ENCODE measurements at regions of chr3 and their contacts with region 1.

Region 1: DNA sequence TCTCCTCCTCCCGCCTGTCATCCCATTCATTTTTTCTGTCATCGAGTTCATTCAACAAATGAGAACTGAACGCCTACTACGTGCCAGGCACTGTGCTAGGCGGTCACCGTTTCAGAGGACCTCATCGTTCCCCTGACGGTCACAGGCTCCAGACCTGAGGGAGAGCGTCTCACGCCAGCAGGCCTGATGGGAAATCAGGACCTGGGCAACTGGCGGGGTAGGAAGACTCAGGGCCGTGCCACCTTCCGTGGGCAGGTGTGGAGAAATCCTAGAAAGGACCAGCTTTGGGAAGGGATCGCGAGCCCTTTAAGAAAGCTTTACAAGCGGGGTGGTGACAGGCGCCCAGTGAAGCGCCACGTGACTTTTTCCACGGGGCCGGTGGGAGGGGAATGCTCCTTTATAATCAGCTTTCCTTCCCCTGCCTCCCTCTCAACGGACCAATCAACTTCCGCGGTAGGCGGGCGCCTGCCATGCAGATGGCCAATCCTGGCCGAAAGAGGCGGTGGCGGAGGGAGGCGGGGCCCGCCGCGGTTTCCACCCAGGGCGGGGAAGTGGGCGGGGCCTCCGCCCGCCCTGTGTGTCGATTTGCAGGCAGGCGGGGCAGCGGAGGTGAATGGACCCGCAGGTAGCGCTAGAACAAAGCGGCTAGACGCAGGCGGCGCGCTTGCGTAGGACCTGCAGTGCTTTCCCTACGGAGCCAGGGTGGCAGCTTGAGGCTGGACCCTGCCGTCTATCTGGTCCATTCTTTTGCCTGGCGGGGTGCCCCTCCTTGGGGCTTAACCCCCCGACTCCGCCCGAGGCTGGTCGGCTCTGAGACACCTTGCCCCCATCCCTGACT is 816 bp upstream of the DUSP7 start:
- DNase-seq: peak; percentile 97
- ATAC-seq: peak; percentile 81
- H3K4me3 ChIP-seq: peak overlapping the region; percentile 62 to 83 (median 68)
- H3K27ac ChIP-seq: peak overlapping the region; percentile 58
- H3K4me1 ChIP-seq: peaks cover 50% of the 10 kb centered on the region
- H3K27me3 ChIP-seq: peaks cover 4 to 31% of the 10 kb centered on the region in 2 experiments; a peak in 4 of 5 replicates
- CTCF ChIP-seq: peak; percentile 76
- EP300 ChIP-seq: 0 out of 4 replicates have a peak, but pooled peaks of 1 of the 2 experiments have one; percentile 7
- POLR2A ChIP-seq: no peak
- RAD21 ChIP-seq: 0 out of 2 replicates have a peak, but pooled peaks have one; percentile 11

Region 2: GRCh38 chr3:51759203-51759602 is 298.0 kb before region 1 on chr3:
- CTCF ChIA-PET with region 1: no interaction called
- POLR2A ChIA-PET with region 1: no interaction called
- in situ Hi-C with region 1: no loop called
- intact Hi-C with region 1: no loop called
- DNase-seq: no peak
- ATAC-seq: no peak
- H3K4me3 ChIP-seq: no peak overlapping the region
- H3K27ac ChIP-seq: no peak overlapping the region
- H3K4me1 ChIP-seq: no peaks in the 10 kb centered on the region
- H3K27me3 ChIP-seq: no peaks in the 10 kb centered on the region
- CTCF ChIP-seq: no peak
- EP300 ChIP-seq: no peak
- POLR2A ChIP-seq: no peak
- RAD21 ChIP-seq: no peak

Region 3: GRCh38 chr3:51799879-51800749 is 257.1 kb before region 1 on chr3:
- CTCF ChIA-PET with region 1: no interaction called
- POLR2A ChIA-PET with region 1: no interaction called
- in situ Hi-C with region 1: no loop called
- intact Hi-C with region 1: no loop called
- DNase-seq: peak; percentile 49
- ATAC-seq: 0 out of 3 replicates have a peak, but pooled peaks have one; percentile 33
- H3K4me3 ChIP-seq: no peak overlapping the region
- H3K27ac ChIP-seq: no peak overlapping the region
- H3K4me1 ChIP-seq: no peaks in the 10 kb centered on the region
- H3K27me3 ChIP-seq: peaks cover 2 to 21% of the 10 kb centered on the region in 2 experiments; a peak in 3 of 5 replicates
- CTCF ChIP-seq: peak; percentile 68
- EP300 ChIP-seq: no peak
- POLR2A ChIP-seq: no peak
- RAD21 ChIP-seq: peak; percentile 33; the same call in 1 of the 2 replicates

Region 4: GRCh38 chr3:51941798-51942602 is 115.2 kb before region 1 on chr3 and contains the starts of genes PARP3 and RRP9:
- CTCF ChIA-PET with region 1: no interaction called
- POLR2A ChIA-PET with region 1: interaction called, 12 read pairs
- in situ Hi-C with region 1: no loop called
- intact Hi-C with region 1: no loop called
- DNase-seq: peak; percentile 99
- ATAC-seq: peak; percentile 88
- H3K4me3 ChIP-seq: peak within 1 kb of the TSS; percentile 80 to 88 (median 84)
- H3K27ac ChIP-seq: peak within 1 kb of the TSS; percentile 93
- H3K4me1 ChIP-seq: peaks cover 33% of the 10 kb centered on the region
- H3K27me3 ChIP-seq: no peaks in the 10 kb centered on the region; a peak in 1 of 5 replicates
- CTCF ChIP-seq: peak; percentile 100
- EP300 ChIP-seq: peak in 1 of 2 experiments; percentile 20; a peak in 1 of 4 replicates
- POLR2A ChIP-seq: peak in 1 of 2 experiments; percentile 45; a peak in 1 of 4 replicates
- RAD21 ChIP-seq: peak; percentile 99
- total RNA-seq, gene PARP3: 7.7 and 11.2 TPM in 2 replicates
- total RNA-seq, gene RRP9: 39.4 and 44.0 TPM in 2 replicates

Region 5: GRCh38 chr3:51995346-51996163 is 61.6 kb before region 1 on chr3 and contains the start of gene RPL29:
- CTCF ChIA-PET with region 1: no interaction called
- POLR2A ChIA-PET with region 1: interaction called, 19 read pairs
- in situ Hi-C with region 1: no loop called
- intact Hi-C with region 1: no loop called
- DNase-seq: peak; percentile 87
- ATAC-seq: peak; percentile 79
- H3K4me3 ChIP-seq: peak within 1 kb of the TSS; percentile 73 to 90 (median 83)
- H3K27ac ChIP-seq: peak within 1 kb of the TSS; percentile 87
- H3K4me1 ChIP-seq: peaks cover 63% of the 10 kb centered on the region
- H3K27me3 ChIP-seq: no peaks in the 10 kb centered on the region; a peak in 1 of 5 replicates
- CTCF ChIP-seq: peak; percentile 49
- EP300 ChIP-seq: peak; percentile 32 to 50; a peak in 2 of 4 replicates
- POLR2A ChIP-seq: peak; percentile 94 to 95
- RAD21 ChIP-seq: peak; percentile 29; the same call in 1 of the 2 replicates
- total RNA-seq, gene RPL29: 1,348 and 1,507 TPM in 2 replicates

Region 6: GRCh38 chr3:52041118-52041731 is 16.0 kb before region 1 on chr3:
- CTCF ChIA-PET with region 1: no interaction called
- POLR2A ChIA-PET with region 1: interaction called, 20 read pairs
- in situ Hi-C with region 1: no loop called
- intact Hi-C with region 1: loop called (anchors 2 kb)
- DNase-seq: peak; percentile 38
- ATAC-seq: peak; percentile 50
- H3K4me3 ChIP-seq: 0 out of 6 replicates have a peak overlapping the region, but pooled peaks of 1 of the 3 experiments have one; percentile 14
- H3K27ac ChIP-seq: no peak overlapping the region
- H3K4me1 ChIP-seq: peaks cover 67% of the 10 kb centered on the region
- H3K27me3 ChIP-seq: no peaks in the 10 kb centered on the region; a peak in 1 of 5 replicates
- CTCF ChIP-seq: peak; percentile 40
- EP300 ChIP-seq: no peak
- POLR2A ChIP-seq: no peak
- RAD21 ChIP-seq: peak; percentile 17; the same call in 1 of the 2 replicates

Region 7: DNA sequence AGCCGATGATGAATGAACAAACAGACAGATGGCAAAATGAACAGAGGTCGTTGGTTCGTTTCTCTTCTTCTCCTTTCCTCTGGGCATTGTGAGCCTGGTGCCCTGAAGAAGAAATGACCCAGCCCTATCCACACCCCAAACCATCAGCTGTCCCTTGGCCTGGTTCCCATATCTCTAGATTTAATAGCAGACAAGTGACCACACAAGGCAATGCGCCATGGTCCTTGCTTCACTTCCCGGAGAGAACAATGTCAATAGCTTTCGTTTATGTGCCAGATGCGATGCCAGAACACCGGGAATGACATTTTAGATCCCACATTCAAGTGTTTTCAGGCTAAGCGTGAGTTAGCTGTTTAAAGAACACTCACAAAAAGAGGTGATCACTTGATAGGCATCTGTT is 79.3 kb after region 1 on chr3:
- CTCF ChIA-PET with region 1: no interaction called
- POLR2A ChIA-PET with region 1: no interaction called
- in situ Hi-C with region 1: loop called (anchors 5 kb)
- intact Hi-C with region 1: no loop called
- DNase-seq: no peak
- ATAC-seq: no peak
- H3K4me3 ChIP-seq: no peak overlapping the region
- H3K27ac ChIP-seq: no peak overlapping the region
- H3K4me1 ChIP-seq: no peaks in the 10 kb centered on the region
- H3K27me3 ChIP-seq: no peaks in the 10 kb centered on the region
- CTCF ChIP-seq: no peak
- EP300 ChIP-seq: no peak
- POLR2A ChIP-seq: no peak
- RAD21 ChIP-seq: no peak